ENCODE measurements at regions of chrX and their contacts with region 1.

Region 1: GRCh38 chrX:23616361-23616760 is 50.9 kb upstream of the PRDX4 start:
- DNase-seq: no peak
- H3K4me3 ChIP-seq: no peak overlapping the region
- H3K27ac ChIP-seq: no peak overlapping the region
- H3K4me1 ChIP-seq: no peaks in the 10 kb centered on the region
- H3K27me3 ChIP-seq: no peaks in the 10 kb centered on the region
- CTCF ChIP-seq: peak in 2 of 3 experiments; percentile 21 to 30; a peak in 2 of 4 replicates
- EP300 ChIP-seq: no peak
- POLR2A ChIP-seq: no peak
- RAD21 ChIP-seq: peak; percentile 55 to 56

Region 2: GRCh38 chrX:23626651-23627050 is 10.3 kb after region 1 on chrX:
- CTCF ChIA-PET with region 1: interaction called, 11 read pairs
- POLR2A ChIA-PET with region 1: no interaction called
- DNase-seq: no peak
- H3K4me3 ChIP-seq: no peak overlapping the region
- H3K27ac ChIP-seq: no peak overlapping the region
- H3K4me1 ChIP-seq: no peaks in the 10 kb centered on the region
- H3K27me3 ChIP-seq: no peaks in the 10 kb centered on the region
- CTCF ChIP-seq: peak in 1 of 3 experiments; percentile 39; a peak in 1 of 4 replicates
- EP300 ChIP-seq: no peak
- POLR2A ChIP-seq: no peak
- RAD21 ChIP-seq: peak; percentile 29 to 46; a peak in 3 of 4 replicates

Region 3: DNA sequence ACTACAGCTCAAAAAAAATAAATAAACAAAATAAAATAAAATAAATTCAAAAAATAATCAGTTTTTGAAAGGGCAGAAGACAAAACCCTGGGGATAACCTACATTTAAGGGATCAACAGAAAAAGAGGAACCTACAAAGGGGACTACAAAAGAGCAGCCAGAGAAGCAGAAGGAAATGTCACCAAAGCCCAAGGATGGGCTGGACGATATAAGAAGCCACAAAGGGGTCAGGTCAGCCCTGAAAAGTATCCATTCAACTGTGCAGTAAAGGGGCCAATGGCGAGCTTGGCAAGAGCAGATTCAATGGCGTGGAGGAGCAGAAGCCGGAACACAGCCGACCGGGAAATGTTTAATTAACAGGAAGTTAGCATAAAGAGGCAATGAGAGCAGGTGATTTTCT is 109.8 kb after region 1 on chrX:
- CTCF ChIA-PET with region 1: no interaction called
- POLR2A ChIA-PET with region 1: no interaction called
- DNase-seq: no peak
- H3K4me3 ChIP-seq: no peak overlapping the region
- H3K27ac ChIP-seq: no peak overlapping the region
- H3K4me1 ChIP-seq: no peaks in the 10 kb centered on the region
- H3K27me3 ChIP-seq: no peaks in the 10 kb centered on the region
- CTCF ChIP-seq: no peak
- EP300 ChIP-seq: no peak
- POLR2A ChIP-seq: no peak
- RAD21 ChIP-seq: no peak